PC-9 (cell line): ENCODE measurements at regions of chr14 and their contacts with region 1.

Region 1: DNA sequence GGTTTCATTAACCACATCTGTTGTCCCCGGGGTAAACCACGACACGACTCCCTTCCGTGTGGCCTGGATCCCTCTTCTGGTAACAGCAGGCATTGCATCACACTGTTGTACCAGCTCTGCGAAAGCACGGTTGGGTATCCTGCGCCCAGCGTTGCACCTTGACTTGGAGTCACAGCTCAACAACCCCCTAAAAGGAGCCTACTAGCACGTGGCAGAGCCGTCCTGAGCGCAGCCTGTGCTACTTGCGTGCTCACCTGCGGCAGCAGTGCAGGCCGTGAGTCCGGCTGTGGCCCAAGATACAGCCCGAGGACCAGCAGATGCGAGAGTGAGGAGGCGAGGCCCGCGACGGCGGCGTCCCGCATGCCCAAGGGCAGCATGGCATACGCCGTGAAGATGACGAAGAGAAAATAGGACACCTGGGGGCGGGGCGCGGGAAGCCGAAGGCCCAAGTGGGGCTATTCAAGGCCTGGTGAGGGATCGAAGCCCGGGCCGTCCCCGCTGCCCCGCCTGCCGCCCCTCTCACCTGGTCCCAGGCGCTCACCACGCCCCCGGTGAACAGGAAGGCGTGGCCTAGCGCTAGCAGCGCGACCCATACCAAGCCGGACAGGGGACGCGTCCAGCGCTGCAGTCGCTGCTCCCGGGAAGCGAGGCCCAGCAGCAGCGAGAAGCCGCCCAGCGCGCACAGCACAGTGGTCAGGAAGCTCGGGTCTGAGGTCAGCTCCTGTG is 2.4 kb downstream of the ADCY4 start:
- DNase-seq: peak in 1 of 2 experiments; percentile 53
- H3K4me3 ChIP-seq: no peak overlapping the region
- H3K27ac ChIP-seq: no peak overlapping the region
- H3K4me1 ChIP-seq: peaks cover 3% of the 10 kb centered on the region; the same call in 1 of the 2 replicates
- H3K27me3 ChIP-seq: no peaks in the 10 kb centered on the region
- CTCF ChIP-seq: peak; percentile 45; the same call in 1 of the 2 replicates

Region 2: GRCh38 chr14:24299255-24300195 is 32.9 kb before region 1 on chr14 and contains the starts of genes DHRS1 and NOP9:
- CTCF ChIA-PET with region 1: interaction called, 11 read pairs
- POLR2A ChIA-PET with region 1: interaction called, 4 read pairs
- intact Hi-C with region 1: no loop called
- DNase-seq: peak; percentile 68 to 86
- H3K4me3 ChIP-seq: peak within 1 kb of the TSS; percentile 88
- H3K27ac ChIP-seq: peak within 1 kb of the TSS; percentile 53
- H3K4me1 ChIP-seq: peaks cover 16% of the 10 kb centered on the region
- H3K27me3 ChIP-seq: no peaks in the 10 kb centered on the region
- CTCF ChIP-seq: no peak
- total RNA-seq, gene DHRS1: 37.9 and 41.4 TPM in 2 replicates
- total RNA-seq, gene NOP9: 24.4 and 31.1 TPM in 2 replicates

Region 3: DNA sequence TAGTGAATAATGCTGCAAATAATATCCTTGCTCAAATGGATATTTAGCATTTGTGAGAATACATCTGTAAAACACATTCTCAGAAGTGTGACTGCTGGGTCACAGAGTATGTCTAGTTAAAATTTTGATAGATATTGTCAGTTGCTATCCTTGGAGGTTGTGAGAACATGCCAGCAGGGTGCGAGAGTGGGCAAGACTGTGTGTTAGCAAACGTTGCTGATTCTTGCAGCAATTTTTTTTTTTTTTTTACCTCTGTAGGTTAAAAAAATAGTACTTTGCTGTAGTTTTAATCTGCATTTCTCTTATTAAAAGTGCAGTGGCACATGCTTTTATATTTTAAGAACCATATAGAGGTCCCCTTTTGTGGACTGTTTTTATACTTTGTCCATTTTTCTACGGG is 61.8 kb after region 1 on chr14:
- CTCF ChIA-PET with region 1: no interaction called
- POLR2A ChIA-PET with region 1: no interaction called
- intact Hi-C with region 1: no loop called
- DNase-seq: no peak
- H3K4me3 ChIP-seq: no peak overlapping the region
- H3K27ac ChIP-seq: no peak overlapping the region
- H3K4me1 ChIP-seq: peaks cover 36% of the 10 kb centered on the region
- H3K27me3 ChIP-seq: no peaks in the 10 kb centered on the region
- CTCF ChIP-seq: no peak

Region 4: GRCh38 chr14:24431569-24432258 is 99.3 kb after region 1 on chr14:
- CTCF ChIA-PET with region 1: interaction called, 26 read pairs
- POLR2A ChIA-PET with region 1: interaction called, 3 read pairs
- intact Hi-C with region 1: loop called (anchors 1 kb)
- DNase-seq: peak; percentile 75 to 85
- H3K4me3 ChIP-seq: peak overlapping the region; percentile 64; the same call in 1 of the 2 replicates
- H3K27ac ChIP-seq: no peak overlapping the region
- H3K4me1 ChIP-seq: peaks cover 9% of the 10 kb centered on the region
- H3K27me3 ChIP-seq: no peaks in the 10 kb centered on the region
- CTCF ChIP-seq: peak; percentile 92

Region 5: DNA sequence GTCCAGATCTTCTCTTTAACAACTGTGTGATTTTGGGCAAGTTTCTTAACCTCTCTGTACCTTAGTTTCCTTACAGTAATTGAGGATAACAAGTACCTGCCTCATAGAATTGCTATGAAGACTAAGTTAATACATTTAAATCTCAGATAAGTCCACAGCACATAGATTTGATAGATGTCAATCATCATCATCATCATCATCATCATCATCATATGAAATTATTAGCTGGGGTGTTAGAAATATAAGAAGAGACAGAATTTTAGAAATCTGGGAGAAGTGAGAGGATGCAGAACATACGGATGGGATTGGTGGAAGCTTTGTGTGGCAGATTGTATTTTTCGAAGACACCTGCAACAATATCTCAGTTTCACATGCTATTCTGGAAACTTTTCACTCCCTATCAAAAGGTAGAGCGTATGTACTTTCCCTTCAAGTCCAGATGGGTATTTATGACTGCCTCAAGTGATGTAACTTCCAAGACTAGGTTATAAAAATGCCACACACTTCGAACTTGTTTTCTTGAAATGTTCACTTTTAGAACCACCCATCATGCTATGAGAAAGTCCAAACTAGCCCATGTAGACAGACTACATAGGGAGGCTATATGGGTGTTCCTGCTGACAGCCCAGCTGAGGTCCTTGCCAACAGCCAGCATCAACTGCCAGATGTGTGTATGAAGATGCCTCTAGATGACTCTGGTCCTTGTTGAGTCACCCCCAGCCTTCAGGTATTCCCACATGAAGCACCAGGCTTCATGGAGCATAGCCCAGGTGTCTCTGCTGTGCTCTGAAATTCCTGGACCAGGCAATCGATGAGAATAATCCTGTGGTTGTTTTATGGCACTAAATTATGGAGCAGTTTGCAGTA is 130.8 kb after region 1 on chr14:
- CTCF ChIA-PET with region 1: no interaction called
- POLR2A ChIA-PET with region 1: no interaction called
- intact Hi-C with region 1: no loop called
- DNase-seq: no peak
- H3K4me3 ChIP-seq: no peak overlapping the region
- H3K27ac ChIP-seq: no peak overlapping the region
- H3K4me1 ChIP-seq: no peaks in the 10 kb centered on the region
- H3K27me3 ChIP-seq: no peaks in the 10 kb centered on the region
- CTCF ChIP-seq: no peak

Region 6: DNA sequence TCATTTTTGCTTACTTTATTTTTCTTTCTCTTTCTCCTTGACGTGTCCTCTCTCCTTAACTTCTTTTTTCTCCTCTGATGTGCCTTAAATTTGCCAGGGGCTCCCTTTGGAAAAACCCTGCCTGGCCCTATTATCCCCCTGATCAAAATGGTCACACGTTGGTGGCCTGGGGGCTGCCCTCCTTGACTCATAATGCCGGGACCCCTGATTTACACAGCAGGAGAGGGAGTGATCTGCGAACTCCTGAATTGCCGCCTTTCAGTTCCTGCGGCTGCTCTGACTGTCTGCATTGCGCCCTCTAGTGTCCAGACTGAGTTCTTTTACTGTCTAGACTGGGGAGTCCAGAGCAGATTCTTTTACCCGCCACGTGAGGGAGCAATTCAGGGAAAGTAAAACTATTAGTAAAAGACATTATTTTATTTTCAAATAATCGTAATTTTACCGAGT is 346.4 kb after region 1 on chr14:
- CTCF ChIA-PET with region 1: no interaction called
- POLR2A ChIA-PET with region 1: no interaction called
- intact Hi-C with region 1: loop called (anchors 2 kb)
- DNase-seq: peak; percentile 47 to 66
- H3K4me3 ChIP-seq: no peak overlapping the region
- H3K27ac ChIP-seq: no peak overlapping the region
- H3K4me1 ChIP-seq: no peaks in the 10 kb centered on the region
- H3K27me3 ChIP-seq: no peaks in the 10 kb centered on the region; the same call in 1 of the 2 replicates
- CTCF ChIP-seq: peak; percentile 91